Thyroid gland (tissue), 4 donors: ENCODE measurements at regions of chr16 and their contacts with region 1.

Region 1: GRCh38 chr16:69150146-69150865 is 17.9 kb downstream of the UTP4 start:
- DNase-seq: peak; percentile 65 to 69
- H3K4me3 ChIP-seq: no peak overlapping the region
- H3K27ac ChIP-seq: peak overlapping the region; percentile 41 to 92 (median 78)
- H3K4me1 ChIP-seq: peaks cover 10 to 11% of the 10 kb centered on the region in 2 donors
- H3K27me3 ChIP-seq: no peaks in the 10 kb centered on the region
- CTCF ChIP-seq: peak in 5 of 6 experiments; percentile 44 to 94 (median 80)
- POLR2A ChIP-seq: no peak

Region 2: GRCh38 chr16:69100071-69100691 is 50.1 kb before region 1 on chr16:
- intact Hi-C with region 1: no loop called
- DNase-seq: peak; percentile 94 to 96
- H3K4me3 ChIP-seq: peak overlapping the region in 1 of 3 donors; percentile 2
- H3K27ac ChIP-seq: peak overlapping the region; percentile 54 to 83 (median 77)
- H3K4me1 ChIP-seq: peaks cover 33 to 49% of the 10 kb centered on the region in 2 donors
- H3K27me3 ChIP-seq: no peaks in the 10 kb centered on the region
- CTCF ChIP-seq: no peak
- POLR2A ChIP-seq: peak in 1 of 2 donors; percentile 26

Region 3: GRCh38 chr16:69286941-69287713 is 136.8 kb after region 1 on chr16:
- intact Hi-C with region 1: loop called (anchors 5 kb)
- DNase-seq: peak; percentile 19 to 30
- H3K4me3 ChIP-seq: no peak overlapping the region
- H3K27ac ChIP-seq: peak overlapping the region; percentile 20 to 64 (median 47)
- H3K4me1 ChIP-seq: peaks cover 10 to 20% of the 10 kb centered on the region in 2 donors
- H3K27me3 ChIP-seq: no peaks in the 10 kb centered on the region
- CTCF ChIP-seq: peak; percentile 29 to 71 (median 52)
- POLR2A ChIP-seq: no peak